H1 (cell line): ENCODE measurements at regions of chr11 and their contacts with region 1.

Region 1: DNA sequence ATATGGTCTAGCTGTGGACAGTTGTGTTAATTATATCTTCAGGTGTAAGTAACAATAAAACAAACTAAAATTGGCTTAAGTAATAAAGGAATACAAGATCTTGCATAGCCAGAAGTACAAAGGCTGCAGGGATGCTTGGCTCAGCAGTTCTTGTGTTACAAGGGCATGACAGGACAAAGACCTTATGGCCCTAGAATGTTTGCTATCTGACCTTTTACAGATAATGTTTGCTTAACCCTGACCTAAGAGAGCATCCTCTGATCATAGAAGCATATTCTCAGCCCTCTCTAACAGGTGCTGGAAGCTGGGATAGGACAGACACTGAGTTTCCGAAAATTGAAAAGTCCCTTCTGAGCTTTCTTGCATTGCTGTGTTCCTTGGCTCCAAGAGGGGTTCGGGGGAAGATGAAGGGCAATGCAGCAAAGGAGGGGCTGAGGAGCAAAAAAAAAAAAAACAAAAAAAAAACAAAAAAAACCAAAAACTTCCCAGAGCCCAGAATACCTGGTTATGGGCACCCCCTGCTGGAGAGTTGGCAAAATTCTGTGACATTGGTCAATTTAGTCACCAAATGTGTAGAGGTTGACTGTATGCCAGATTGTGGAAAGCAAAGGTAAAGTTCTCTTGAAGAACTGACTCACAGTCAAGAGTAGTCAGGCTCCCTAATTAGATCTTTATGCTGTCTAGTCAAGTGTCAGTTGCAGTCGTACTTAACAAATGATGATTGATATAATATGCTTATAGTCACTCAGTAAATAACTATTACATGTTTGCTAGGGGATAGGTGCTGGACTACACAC is 10.4 kb upstream of the HIKESHI start:
- DNase-seq: peak in 1 of 2 experiments; percentile 79
- H3K4me3 ChIP-seq: no peak overlapping the region
- H3K27ac ChIP-seq: no peak overlapping the region
- H3K4me1 ChIP-seq: peaks cover 0 to 3% (median 0%) of the 10 kb centered on the region in 4 experiments; a peak in 1 of 7 replicates
- H3K27me3 ChIP-seq: no peaks in the 10 kb centered on the region
- CTCF ChIP-seq: peak; percentile 4 to 73 (median 69)
- EP300 ChIP-seq: no peak
- POLR2A ChIP-seq: no peak
- RAD21 ChIP-seq: peak; percentile 82 to 87

Region 2: GRCh38 chr11:86302100-86302793 is 10.6 kb after region 1 on chr11 and contains the start of gene HIKESHI:
- CTCF ChIA-PET with region 1: interaction called, 20 read pairs
- POLR2A ChIA-PET with region 1: interaction called, 3 read pairs
- DNase-seq: peak; percentile 79 to 90
- H3K4me3 ChIP-seq: peak within 1 kb of the TSS; percentile 87 to 95 (median 92)
- H3K27ac ChIP-seq: peak within 1 kb of the TSS; percentile 89
- H3K4me1 ChIP-seq: no peaks in the 10 kb centered on the region; a peak in 1 of 7 replicates
- H3K27me3 ChIP-seq: no peaks in the 10 kb centered on the region; a peak in 1 of 7 replicates
- CTCF ChIP-seq: no peak
- EP300 ChIP-seq: no peak; a peak in 1 of 3 replicates
- POLR2A ChIP-seq: peak; percentile 63 to 86
- RAD21 ChIP-seq: no peak; a peak in 1 of 4 replicates
- total RNA-seq, gene HIKESHI: 58.3 and 65.4 TPM in 2 replicates

Region 3: DNA sequence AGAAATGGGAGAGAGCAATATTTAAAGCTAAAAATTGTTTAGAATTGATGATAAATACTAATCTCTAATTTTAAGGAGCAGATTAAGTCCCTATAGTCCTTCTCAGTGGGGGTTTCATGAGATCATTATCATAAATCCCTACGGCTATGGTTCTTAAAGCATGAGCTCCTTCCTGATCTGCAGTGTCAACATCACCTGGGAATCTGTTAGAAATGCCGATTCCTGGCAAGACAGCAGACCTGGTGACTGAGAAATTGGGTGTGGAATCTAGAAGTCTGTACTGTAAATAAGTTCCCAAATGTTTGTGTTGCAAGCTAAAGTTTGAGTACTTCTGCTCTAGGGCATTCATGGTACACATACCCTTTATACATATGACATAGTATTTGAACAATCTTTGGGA is 23.0 kb after region 1 on chr11:
- CTCF ChIA-PET with region 1: no interaction called
- POLR2A ChIA-PET with region 1: no interaction called
- DNase-seq: no peak
- H3K4me3 ChIP-seq: no peak overlapping the region
- H3K27ac ChIP-seq: no peak overlapping the region
- H3K4me1 ChIP-seq: no peaks in the 10 kb centered on the region
- H3K27me3 ChIP-seq: no peaks in the 10 kb centered on the region
- CTCF ChIP-seq: no peak
- EP300 ChIP-seq: no peak
- POLR2A ChIP-seq: no peak
- RAD21 ChIP-seq: no peak